A549 (cell line): ENCODE measurements at regions of chr2 and their contacts with region 1.

Region 1: GRCh38 chr2:130332271-130333073 is 10.2 kb upstream of the IMP4 start:
- DNase-seq: peak; percentile 52 to 75
- ATAC-seq: peak; percentile 60 to 78
- H3K4me3 ChIP-seq: peak overlapping the region; percentile 39
- H3K27ac ChIP-seq: peak overlapping the region; percentile 21 to 53; a peak in 2 of 6 replicates
- H3K4me1 ChIP-seq: no peaks in the 10 kb centered on the region; the same call in 2 of the 3 replicates
- CTCF ChIP-seq: peak; percentile 97
- EP300 ChIP-seq: no peak
- POLR2A ChIP-seq: no peak
- RAD21 ChIP-seq: peak; percentile 95 to 98

Region 2: DNA sequence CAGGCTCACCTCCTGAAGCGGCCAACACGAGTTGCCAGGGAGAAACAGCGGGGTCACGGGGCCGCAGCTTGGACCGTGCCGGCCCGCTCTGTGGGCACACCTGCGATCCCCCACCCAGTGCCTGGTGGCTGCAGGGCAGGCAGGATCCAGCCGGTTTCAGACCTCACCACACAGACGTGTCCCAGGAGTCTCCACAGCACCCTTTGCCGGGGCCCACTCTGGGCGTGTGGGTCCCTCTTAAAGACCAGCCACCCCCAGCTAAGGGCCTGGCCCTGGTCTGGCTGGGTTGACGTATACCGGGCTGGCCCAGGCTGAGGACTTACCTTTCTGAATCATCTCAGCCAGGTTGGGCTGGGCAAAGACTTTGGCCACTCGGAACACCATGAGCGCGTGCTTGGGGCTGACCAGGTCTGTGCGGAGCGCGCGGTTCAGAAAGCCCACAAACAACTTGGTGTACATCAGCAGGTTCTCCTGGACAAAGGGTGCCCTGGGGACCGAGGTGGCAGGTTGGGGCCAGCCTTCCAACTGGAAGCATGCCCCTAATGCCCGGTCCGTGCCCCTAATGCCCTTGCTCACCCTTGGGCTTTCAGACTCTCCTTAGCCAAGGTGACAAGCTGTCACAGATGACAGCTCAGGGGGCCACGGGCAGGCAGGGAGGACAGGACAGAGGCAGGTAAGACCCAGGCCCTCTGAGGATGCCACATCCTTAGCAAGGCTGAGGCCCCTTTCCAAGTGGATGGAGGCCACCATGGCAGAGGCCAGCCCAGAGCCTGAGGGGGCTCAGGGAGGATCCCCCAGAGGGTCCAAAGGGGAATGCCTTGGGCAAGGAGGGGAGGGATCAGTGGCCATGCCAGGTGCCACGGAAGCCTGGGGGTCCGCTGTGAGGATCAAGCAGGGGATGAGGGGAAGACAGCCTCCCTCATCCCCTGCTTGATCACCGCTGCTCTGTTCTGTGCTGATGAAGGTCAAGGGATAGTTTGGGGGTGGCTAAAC is 177.4 kb before region 1 on chr2:
- CTCF ChIA-PET with region 1: interaction called, 15 read pairs
- POLR2A ChIA-PET with region 1: no interaction called
- DNase-seq: no peak
- ATAC-seq: no peak
- H3K4me3 ChIP-seq: no peak overlapping the region
- H3K27ac ChIP-seq: no peak overlapping the region
- H3K4me1 ChIP-seq: no peaks in the 10 kb centered on the region
- CTCF ChIP-seq: no peak
- EP300 ChIP-seq: no peak
- POLR2A ChIP-seq: no peak
- RAD21 ChIP-seq: no peak

Region 3: DNA sequence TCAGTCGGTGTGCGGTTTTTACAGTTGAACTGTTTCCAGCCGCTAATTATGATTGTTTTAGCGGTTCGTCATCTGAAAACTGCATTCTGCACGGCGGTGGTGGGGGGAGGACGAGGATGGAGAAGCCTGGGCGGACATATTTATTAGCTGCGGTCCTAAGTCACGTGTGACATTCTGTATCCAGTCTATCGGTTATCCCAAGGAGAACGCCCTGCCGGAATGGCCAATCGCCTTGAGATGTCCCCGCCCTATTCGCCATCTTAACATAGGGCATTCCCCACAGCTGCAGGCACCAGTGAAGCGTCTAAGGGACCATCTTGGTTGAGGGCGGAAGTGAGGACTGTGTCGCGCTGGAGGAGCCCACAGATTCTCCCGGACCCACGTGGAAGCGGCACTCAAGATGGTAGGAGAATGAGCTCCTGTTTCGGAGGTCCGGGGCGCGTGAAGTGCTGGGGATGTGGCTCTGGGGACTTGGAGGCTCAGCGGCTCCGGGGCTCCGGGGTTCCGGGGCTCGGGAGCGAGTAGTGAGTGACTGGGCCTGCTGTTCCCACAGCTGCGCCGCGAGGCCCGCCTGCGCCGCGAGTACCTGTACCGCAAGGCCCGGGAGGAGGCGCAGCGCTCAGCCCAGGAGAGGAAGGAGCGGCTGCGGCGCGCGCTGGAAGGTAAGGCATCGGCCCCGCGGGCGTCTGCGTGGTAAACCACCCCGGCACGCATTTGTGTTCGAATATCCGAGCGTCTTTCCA is 10.2 kb after region 1 on chr2 and contains the start of gene IMP4:
- CTCF ChIA-PET with region 1: interaction called, 16 read pairs
- POLR2A ChIA-PET with region 1: interaction called, 5 read pairs
- DNase-seq: peak; percentile 85 to 99
- ATAC-seq: peak; percentile 87 to 95
- H3K4me3 ChIP-seq: peak within 1 kb of the TSS; percentile 88
- H3K27ac ChIP-seq: peak within 1 kb of the TSS; percentile 90 to 95
- H3K4me1 ChIP-seq: peaks cover 18% of the 10 kb centered on the region
- CTCF ChIP-seq: no peak
- EP300 ChIP-seq: no peak
- POLR2A ChIP-seq: peak; percentile 76
- RAD21 ChIP-seq: no peak
- polyA plus RNA-seq, gene IMP4: 113 and 118 TPM in 2 replicates